Heart left ventricle (tissue), 16 donors: ENCODE measurements at regions of chr11 and their contacts with region 1.

Region 1: DNA sequence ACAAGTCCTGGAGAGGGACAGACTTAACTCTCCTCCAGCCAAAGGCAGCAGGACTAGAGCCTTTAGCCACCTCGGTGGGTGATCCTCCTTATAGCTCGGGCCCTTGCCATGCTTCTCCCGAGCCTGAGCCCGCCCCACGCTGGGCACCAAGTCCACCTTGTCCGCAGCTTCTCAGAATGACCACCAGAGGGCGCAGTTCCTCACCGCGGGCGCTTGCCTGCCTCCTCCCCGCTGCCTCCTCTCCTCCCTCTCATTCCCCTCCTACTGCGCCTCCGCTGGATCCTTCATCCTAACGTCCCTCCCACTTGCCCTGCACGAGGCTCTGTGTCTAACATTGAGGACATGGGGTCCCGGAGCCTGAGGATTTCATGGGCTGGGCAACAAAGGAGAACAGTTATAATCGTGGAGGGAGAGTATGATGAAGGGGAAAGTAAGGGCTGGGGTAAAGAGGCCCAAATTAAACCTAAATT is 11.3 kb upstream of the MOGAT2 start:
- DNase-seq: peak; percentile 66 to 81 (median 76)
- ATAC-seq: peak; percentile 80 to 98 (median 93)
- H3K4me3 ChIP-seq: no peak overlapping the region
- H3K27ac ChIP-seq: no peak overlapping the region
- H3K4me1 ChIP-seq: peaks cover 0 to 8% (median 4%) of the 10 kb centered on the region in 12 donors
- H3K27me3 ChIP-seq: no peaks in the 10 kb centered on the region
- CTCF ChIP-seq: peak; percentile 91 to 98 (median 96)
- POLR2A ChIP-seq: no peak

Region 2: GRCh38 chr11:75582895-75583717 is 123.2 kb before region 1 on chr11:
- intact Hi-C with region 1: no loop called
- DNase-seq: peak; percentile 71 to 86 (median 78)
- ATAC-seq: peak; percentile 70 to 89 (median 72)
- H3K4me3 ChIP-seq: peak overlapping the region; percentile 66 to 99 (median 76)
- H3K27ac ChIP-seq: peak overlapping the region; percentile 81 to 99 (median 97)
- H3K4me1 ChIP-seq: peaks cover 0 to 31% (median 19%) of the 10 kb centered on the region in 12 donors
- H3K27me3 ChIP-seq: no peaks in the 10 kb centered on the region
- CTCF ChIP-seq: peak in 9 of 12 donors; percentile 6 to 52 (median 39)
- POLR2A ChIP-seq: peak in 1 of 2 donors; percentile 48

Region 3: DNA sequence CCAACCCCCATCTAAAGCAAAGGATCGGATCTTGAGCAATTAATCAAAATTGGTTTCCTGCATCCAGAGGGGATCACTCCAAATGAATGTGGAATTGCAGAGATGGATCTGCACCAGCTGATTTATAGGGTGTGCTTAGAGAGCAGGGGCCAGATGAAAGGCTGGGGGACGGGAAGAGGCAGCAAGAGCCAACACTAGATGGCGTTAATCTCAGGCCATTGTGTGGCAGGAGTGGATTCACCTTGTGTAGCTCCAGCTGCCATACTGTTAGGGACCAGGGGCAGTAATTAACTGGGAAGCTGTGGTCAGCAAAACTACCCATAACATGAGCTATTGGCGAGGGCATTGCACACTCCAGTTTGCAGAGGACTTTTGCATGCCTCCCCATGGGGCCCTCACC is 108.7 kb before region 1 on chr11:
- intact Hi-C with region 1: loop called in 1 of 10 experiments (anchors 10 kb)
- DNase-seq: no peak
- ATAC-seq: peak in 1 of 4 donors; percentile 29
- H3K4me3 ChIP-seq: no peak overlapping the region
- H3K27ac ChIP-seq: no peak overlapping the region
- H3K4me1 ChIP-seq: peaks cover 0 to 3% (median 0%) of the 10 kb centered on the region in 12 donors
- H3K27me3 ChIP-seq: no peaks in the 10 kb centered on the region
- CTCF ChIP-seq: peak in 9 of 12 donors; percentile 7 to 45 (median 28)
- POLR2A ChIP-seq: no peak

Region 4: GRCh38 chr11:75768112-75768908 is 62.0 kb after region 1 on chr11 and contains the start of gene DGAT2:
- intact Hi-C with region 1: loop called in 5 of 10 experiments (anchors 2 to 10 kb)
- DNase-seq: peak; percentile 77 to 89 (median 83)
- ATAC-seq: peak; percentile 86 to 95 (median 90)
- H3K4me3 ChIP-seq: peak within 1 kb of the TSS; percentile 13 to 63 (median 57)
- H3K27ac ChIP-seq: peak within 1 kb of the TSS in 8 of 12 donors; percentile 15 to 73 (median 60)
- H3K4me1 ChIP-seq: peaks cover 0 to 44% (median 14%) of the 10 kb centered on the region in 12 donors
- H3K27me3 ChIP-seq: peaks cover 0 to 23% (median 7%) of the 10 kb centered on the region in 9 donors
- CTCF ChIP-seq: peak in 9 of 12 donors; percentile 19 to 47 (median 32)
- POLR2A ChIP-seq: peak in 1 of 2 donors; percentile 22
- total RNA-seq, gene DGAT2: 4.4 to 48.3 (median 8.3) TPM